ENCODE measurements at regions of chr1 and their contacts with region 1.

Region 1: DNA sequence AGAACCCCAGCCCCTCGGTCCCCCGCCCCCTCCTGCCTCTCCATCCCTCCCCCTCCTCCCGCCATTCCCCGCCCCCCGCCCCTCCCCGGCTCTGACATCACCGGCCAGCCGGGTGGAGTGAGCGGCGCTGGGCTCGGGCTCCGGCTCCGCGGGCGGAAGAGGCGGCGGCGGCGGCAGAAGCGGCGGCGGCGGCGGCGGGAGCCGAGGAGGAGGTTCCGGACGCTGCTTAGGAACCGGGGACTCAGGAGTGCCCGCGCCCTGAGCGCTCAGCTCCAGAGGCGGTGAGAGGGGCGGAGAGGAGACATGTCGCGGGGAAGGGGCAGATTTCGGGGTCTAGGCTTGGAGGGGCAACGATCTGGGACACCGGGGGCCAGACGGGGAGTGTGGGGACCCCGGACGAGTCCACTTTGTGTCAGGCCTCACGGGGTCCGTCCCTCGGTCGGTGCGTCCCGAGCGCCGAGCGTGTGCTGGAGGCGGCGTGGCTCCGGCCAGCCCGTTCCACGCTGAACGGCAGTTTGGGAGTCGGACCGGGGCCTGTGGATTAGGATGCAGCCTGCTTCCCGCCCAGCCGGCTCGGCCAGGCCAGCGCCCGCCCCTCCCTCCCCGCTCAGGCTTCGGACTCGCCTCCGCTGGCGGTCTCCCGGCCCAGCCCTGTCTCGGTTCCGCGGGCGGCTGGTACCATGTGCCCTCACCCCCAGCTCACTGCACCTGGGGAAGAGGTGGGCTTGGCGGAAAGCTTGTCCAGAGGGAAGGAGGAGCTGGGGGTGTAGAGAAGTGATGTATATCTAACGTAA is at the start of gene PEA15:
- DNase-seq: peak; percentile 69
- ATAC-seq: peak; percentile 51
- H3K4me3 Mint-ChIP-seq: peak within 1 kb of the TSS; percentile 85
- H3K27ac Mint-ChIP-seq: peak within 1 kb of the TSS; percentile 95
- H3K4me1 Mint-ChIP-seq: peaks cover 67% of the 10 kb centered on the region
- H3K27me3 Mint-ChIP-seq: no peaks in the 10 kb centered on the region
- CTCF ChIP-seq: no peak
- total RNA-seq, gene PEA15: 107 and 111 TPM in 2 replicates

Region 2: GRCh38 chr1:160193091-160193819 is 12.2 kb before region 1 on chr1:
- CTCF ChIA-PET with region 1: interaction called, 15 read pairs
- POLR2A ChIA-PET with region 1: interaction called, 5 read pairs
- intact Hi-C with region 1: no loop called
- DNase-seq: peak; percentile 72
- ATAC-seq: peak; percentile 95
- H3K4me3 Mint-ChIP-seq: no peak overlapping the region
- H3K27ac Mint-ChIP-seq: no peak overlapping the region
- H3K4me1 Mint-ChIP-seq: peaks cover 3% of the 10 kb centered on the region
- H3K27me3 Mint-ChIP-seq: no peaks in the 10 kb centered on the region
- CTCF ChIP-seq: peak; percentile 43

Region 3: GRCh38 chr1:160251687-160252526 is 46.5 kb after region 1 on chr1:
- CTCF ChIA-PET with region 1: interaction called, 15 read pairs
- POLR2A ChIA-PET with region 1: interaction called, 5 read pairs
- intact Hi-C with region 1: no loop called
- DNase-seq: no peak
- ATAC-seq: peak; percentile 98
- H3K4me3 Mint-ChIP-seq: no peak overlapping the region
- H3K27ac Mint-ChIP-seq: peak overlapping the region; percentile 50
- H3K4me1 Mint-ChIP-seq: peaks cover 8% of the 10 kb centered on the region
- H3K27me3 Mint-ChIP-seq: no peaks in the 10 kb centered on the region
- CTCF ChIP-seq: peak; percentile 36

Region 4: GRCh38 chr1:160284782-160285344 is 79.4 kb after region 1 on chr1 and contains the start of gene PEX19:
- CTCF ChIA-PET with region 1: interaction called, 39 read pairs
- POLR2A ChIA-PET with region 1: interaction called, 23 read pairs
- intact Hi-C with region 1: no loop called
- DNase-seq: peak; percentile 85
- ATAC-seq: peak; percentile 100
- H3K4me3 Mint-ChIP-seq: peak within 1 kb of the TSS; percentile 95
- H3K27ac Mint-ChIP-seq: peak within 1 kb of the TSS; percentile 87
- H3K4me1 Mint-ChIP-seq: peaks cover 24% of the 10 kb centered on the region
- H3K27me3 Mint-ChIP-seq: no peaks in the 10 kb centered on the region
- CTCF ChIP-seq: no peak
- total RNA-seq, gene PEX19: 43.7 and 50.3 TPM in 2 replicates

Region 5: DNA sequence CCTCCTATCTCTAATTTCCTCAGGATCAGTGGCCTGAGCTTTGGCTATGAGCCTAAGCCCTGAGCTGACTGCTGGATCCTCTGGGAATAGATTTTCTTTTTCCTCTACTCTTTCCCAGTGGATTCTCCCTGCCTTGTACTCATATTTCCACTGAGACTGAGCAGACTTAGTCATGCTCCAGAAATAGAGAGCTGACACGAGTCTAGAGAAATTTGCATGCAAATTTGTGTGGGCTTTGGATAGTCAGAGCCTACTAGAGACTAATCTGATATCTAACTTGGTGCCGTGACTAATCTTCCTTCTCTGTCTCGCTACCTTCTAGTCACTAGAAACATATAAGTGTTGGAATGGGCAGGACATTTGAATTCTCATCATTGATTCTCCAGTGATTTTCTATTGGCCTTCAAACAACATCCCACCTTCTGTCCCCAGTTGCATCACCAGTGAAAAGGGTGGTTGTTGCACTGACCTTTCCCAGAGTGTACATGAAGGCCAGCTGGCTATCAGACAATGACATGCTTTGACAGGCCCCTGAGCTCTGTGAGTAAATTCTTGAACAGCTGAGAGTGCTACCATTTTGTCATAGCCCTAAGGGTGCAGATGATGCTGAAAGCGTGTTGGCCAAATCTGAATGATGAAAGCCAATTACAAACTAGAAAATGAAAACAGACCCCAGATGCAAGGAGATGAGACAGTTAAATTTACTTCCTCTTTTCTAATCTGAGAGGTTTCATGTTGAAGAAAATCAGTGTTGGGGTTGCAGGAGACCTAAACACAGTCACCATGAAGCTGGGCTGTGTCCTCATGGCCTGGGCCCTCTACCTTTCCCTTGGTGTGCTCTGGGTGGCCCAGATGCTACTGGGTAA is 1501.3 kb after region 1 on chr1 and contains the start of gene FCRLA:
- CTCF ChIA-PET with region 1: no interaction called
- POLR2A ChIA-PET with region 1: no interaction called
- intact Hi-C with region 1: loop called (anchors 10 kb)
- DNase-seq: no peak
- ATAC-seq: peak; percentile 53
- H3K4me3 Mint-ChIP-seq: no peak within 1 kb of the TSS
- H3K27ac Mint-ChIP-seq: no peak within 1 kb of the TSS
- H3K4me1 Mint-ChIP-seq: peaks cover 28% of the 10 kb centered on the region
- H3K27me3 Mint-ChIP-seq: no peaks in the 10 kb centered on the region
- CTCF ChIP-seq: no peak
- total RNA-seq, gene FCRLA: 175 and 178 TPM in 2 replicates